ENCODE measurements at regions of chr1 and their contacts with region 1.

Region 1: DNA sequence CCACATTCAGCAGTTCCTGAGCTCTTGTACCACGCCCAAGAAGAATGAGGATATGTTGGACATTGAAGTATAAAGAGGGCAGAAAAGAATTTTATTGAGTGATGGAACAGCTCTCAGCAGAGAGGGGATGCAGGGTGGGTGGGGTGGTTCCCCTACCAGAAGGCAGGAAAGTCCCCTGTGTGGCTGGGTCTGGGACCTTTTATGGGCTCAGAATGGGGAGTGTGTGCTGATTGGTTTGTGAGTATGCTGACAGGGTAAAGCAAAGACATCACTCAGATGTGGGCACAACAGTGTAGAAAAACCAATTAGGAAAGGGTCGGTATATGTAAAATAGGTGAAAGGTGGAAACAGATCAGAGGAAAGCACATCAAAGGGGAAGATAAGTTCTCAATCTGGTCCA is 62.2 kb downstream of the SGIP1 start:
- DNase-seq: no peak
- H3K4me3 ChIP-seq: no peak overlapping the region
- H3K27ac ChIP-seq: no peak overlapping the region
- H3K27me3 ChIP-seq: no peaks in the 10 kb centered on the region
- CTCF ChIP-seq: no peak

Region 2: GRCh38 chr1:66652556-66652955 is 56.4 kb after region 1 on chr1:
- CTCF ChIA-PET with region 1: no interaction called
- POLR2A ChIA-PET with region 1: no interaction called
- DNase-seq: no peak
- H3K4me3 ChIP-seq: no peak overlapping the region
- H3K27ac ChIP-seq: no peak overlapping the region
- H3K27me3 ChIP-seq: no peaks in the 10 kb centered on the region
- CTCF ChIP-seq: no peak

Region 3: GRCh38 chr1:66663730-66664129 is 67.5 kb after region 1 on chr1:
- CTCF ChIA-PET with region 1: no interaction called
- POLR2A ChIA-PET with region 1: interaction called, 10 read pairs
- DNase-seq: no peak
- H3K4me3 ChIP-seq: no peak overlapping the region
- H3K27ac ChIP-seq: no peak overlapping the region
- H3K27me3 ChIP-seq: no peaks in the 10 kb centered on the region
- CTCF ChIP-seq: no peak

Measured in AG04450 (cell line).